CD4-positive, alpha-beta T cell (primary cell): ENCODE measurements at regions of chr17 and their contacts with region 1.

Region 1: GRCh38 chr17:42577532-42578281 is at the start of gene PSMC3IP:
- DNase-seq: peak; percentile 81 to 95 (median 90)
- ATAC-seq: peak; percentile 89
- H3K4me3 ChIP-seq: peak within 1 kb of the TSS; percentile 67
- H3K4me3 Mint-ChIP-seq: peak within 1 kb of the TSS; percentile 97
- H3K27ac ChIP-seq: peak within 1 kb of the TSS; percentile 49 to 67
- H3K27ac Mint-ChIP-seq: peak within 1 kb of the TSS; percentile 80
- H3K4me1 ChIP-seq: peaks cover 21% of the 10 kb centered on the region
- H3K4me1 Mint-ChIP-seq: peaks cover 32% of the 10 kb centered on the region
- H3K27me3 ChIP-seq: no peaks in the 10 kb centered on the region
- H3K27me3 Mint-ChIP-seq: no peaks in the 10 kb centered on the region
- CTCF ChIP-seq: peak; percentile 53
- total RNA-seq, gene PSMC3IP: 2.6 to 3.4 TPM

Region 2: GRCh38 chr17:42484304-42484703 is 93.4 kb before region 1 on chr17:
- CTCF ChIA-PET with region 1: no interaction called
- POLR2A ChIA-PET with region 1: no interaction called
- intact Hi-C with region 1: no loop called
- DNase-seq: peak; percentile 33 to 94 (median 50)
- ATAC-seq: peak; percentile 95
- H3K4me3 ChIP-seq: peak overlapping the region; percentile 10
- H3K4me3 Mint-ChIP-seq: peak overlapping the region; percentile 52
- H3K27ac ChIP-seq: no peak overlapping the region
- H3K27ac Mint-ChIP-seq: peak overlapping the region; percentile 32
- H3K4me1 ChIP-seq: peaks cover 33% of the 10 kb centered on the region
- H3K4me1 Mint-ChIP-seq: peaks cover 39% of the 10 kb centered on the region
- H3K27me3 ChIP-seq: no peaks in the 10 kb centered on the region
- H3K27me3 Mint-ChIP-seq: no peaks in the 10 kb centered on the region
- CTCF ChIP-seq: no peak

Region 3: DNA sequence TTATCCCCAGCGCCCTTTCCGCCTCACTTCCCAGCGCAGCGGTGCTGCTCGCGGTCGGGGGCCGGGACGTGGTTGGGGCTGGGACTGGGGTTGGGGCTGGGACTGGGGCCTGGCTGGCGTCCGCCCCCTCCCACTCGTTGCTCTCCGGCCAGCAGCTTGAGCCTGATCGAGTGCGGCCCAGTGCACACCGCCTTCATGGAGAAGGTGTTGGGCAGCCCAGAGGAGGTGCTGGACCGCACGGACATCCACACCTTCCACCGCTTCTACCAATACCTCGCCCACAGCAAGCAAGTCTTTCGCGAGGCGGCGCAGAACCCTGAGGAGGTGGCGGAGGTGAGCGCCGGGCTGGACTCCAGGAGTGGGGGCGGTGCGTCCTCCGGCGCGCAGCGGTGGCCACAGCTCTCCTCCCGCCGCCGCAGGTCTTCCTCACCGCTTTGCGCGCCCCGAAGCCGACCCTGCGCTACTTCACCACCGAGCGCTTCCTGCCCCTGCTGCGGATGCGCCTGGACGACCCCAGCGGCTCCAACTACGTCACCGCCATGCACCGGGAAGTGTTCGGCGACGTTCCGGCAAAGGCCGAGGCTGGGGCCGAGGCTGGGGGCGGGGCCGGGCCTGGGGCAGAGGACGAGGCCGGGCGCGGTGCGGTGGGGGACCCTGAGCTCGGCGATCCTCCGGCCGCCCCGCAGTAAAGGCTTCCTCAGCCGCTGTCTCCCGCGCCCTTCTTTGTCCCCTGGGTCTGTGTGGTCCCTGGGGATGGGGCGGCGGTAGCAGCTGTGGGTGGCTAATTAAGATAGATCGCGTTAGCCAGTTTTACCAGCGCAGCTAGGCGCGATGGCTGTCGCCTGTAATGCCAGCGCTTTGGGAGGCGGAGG is 23.2 kb before region 1 on chr17:
- CTCF ChIA-PET with region 1: interaction called, 15 read pairs
- POLR2A ChIA-PET with region 1: interaction called, 10 read pairs
- intact Hi-C with region 1: loop called in 1 of 2 experiments (anchors 2 kb)
- DNase-seq: peak; percentile 40 to 89 (median 69)
- ATAC-seq: peak; percentile 87
- H3K4me3 ChIP-seq: peak overlapping the region; percentile 84
- H3K4me3 Mint-ChIP-seq: peak overlapping the region; percentile 93
- H3K27ac ChIP-seq: peak overlapping the region; percentile 83 to 87
- H3K27ac Mint-ChIP-seq: peak overlapping the region; percentile 90
- H3K4me1 ChIP-seq: peaks cover 26% of the 10 kb centered on the region
- H3K4me1 Mint-ChIP-seq: peaks cover 31% of the 10 kb centered on the region
- H3K27me3 ChIP-seq: no peaks in the 10 kb centered on the region
- H3K27me3 Mint-ChIP-seq: no peaks in the 10 kb centered on the region
- CTCF ChIP-seq: no peak

Region 4: DNA sequence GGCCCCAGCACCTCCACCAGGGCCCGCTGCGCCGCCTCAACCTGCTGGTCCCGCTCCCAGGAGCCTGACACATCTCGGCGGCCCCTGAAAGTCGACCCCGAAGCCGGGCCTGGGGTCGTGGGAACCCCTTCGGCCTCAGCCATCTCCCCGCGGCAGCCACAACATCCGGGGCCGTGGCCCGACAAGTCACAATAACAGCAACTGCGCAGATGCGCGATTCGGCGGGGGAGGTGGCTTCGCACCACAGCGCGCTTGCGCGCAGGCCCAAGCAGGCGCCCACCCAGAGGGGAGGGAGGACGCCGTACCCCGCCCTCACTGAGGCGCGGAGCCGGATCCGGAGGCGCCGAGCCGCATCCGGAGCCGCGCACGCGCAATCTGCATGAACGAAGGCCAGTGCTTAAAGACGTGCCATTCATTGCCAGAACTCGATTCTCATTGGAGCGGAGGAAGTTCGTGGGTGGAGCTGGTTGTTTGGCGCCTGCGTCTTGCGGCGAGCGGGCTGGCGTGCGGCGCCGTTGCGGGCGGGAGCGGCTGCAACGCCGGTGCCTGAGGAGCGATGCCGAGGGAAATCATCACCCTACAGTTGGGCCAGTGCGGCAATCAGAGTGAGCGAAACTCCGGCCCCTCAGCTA is 31.6 kb after region 1 on chr17 and contains the starts of genes RETREG3 and TUBG1:
- CTCF ChIA-PET with region 1: interaction called, 26 read pairs
- POLR2A ChIA-PET with region 1: interaction called, 42 read pairs
- intact Hi-C with region 1: no loop called
- DNase-seq: peak; percentile 97 to 100 (median 99)
- ATAC-seq: peak; percentile 90
- H3K4me3 ChIP-seq: peak within 1 kb of the TSS; percentile 100
- H3K4me3 Mint-ChIP-seq: peak within 1 kb of the TSS; percentile 100
- H3K27ac ChIP-seq: peak within 1 kb of the TSS; percentile 92 to 96
- H3K27ac Mint-ChIP-seq: peak within 1 kb of the TSS; percentile 97
- H3K4me1 ChIP-seq: peaks cover 40% of the 10 kb centered on the region
- H3K4me1 Mint-ChIP-seq: peaks cover 51% of the 10 kb centered on the region
- H3K27me3 ChIP-seq: no peaks in the 10 kb centered on the region
- H3K27me3 Mint-ChIP-seq: no peaks in the 10 kb centered on the region
- CTCF ChIP-seq: no peak
- total RNA-seq, gene RETREG3: 46.7 to 48.7 TPM
- total RNA-seq, gene TUBG1: 7.3 to 8.5 TPM

Region 5: GRCh38 chr17:42760652-42761581 is 183.2 kb after region 1 on chr17 and contains the start of gene RAMP2:
- CTCF ChIA-PET with region 1: interaction called, 9 read pairs
- POLR2A ChIA-PET with region 1: interaction called, 7 read pairs
- intact Hi-C with region 1: loop called (anchors 1 kb)
- DNase-seq: peak in 3 of 14 experiments; percentile 13 to 41 (median 37)
- ATAC-seq: peak; percentile 39
- H3K4me3 ChIP-seq: peak within 1 kb of the TSS; percentile 10
- H3K4me3 Mint-ChIP-seq: peak within 1 kb of the TSS; percentile 67
- H3K27ac ChIP-seq: no peak within 1 kb of the TSS
- H3K27ac Mint-ChIP-seq: no peak within 1 kb of the TSS
- H3K4me1 ChIP-seq: peaks cover 15% of the 10 kb centered on the region
- H3K4me1 Mint-ChIP-seq: peaks cover 9% of the 10 kb centered on the region
- H3K27me3 ChIP-seq: peaks cover 47% of the 10 kb centered on the region in 2 experiments
- H3K27me3 Mint-ChIP-seq: peaks cover 79% of the 10 kb centered on the region
- CTCF ChIP-seq: no peak
- total RNA-seq, gene RAMP2: not detected